H1 (cell line): ENCODE measurements at regions of chr2 and their contacts with region 1.

Region 1: DNA sequence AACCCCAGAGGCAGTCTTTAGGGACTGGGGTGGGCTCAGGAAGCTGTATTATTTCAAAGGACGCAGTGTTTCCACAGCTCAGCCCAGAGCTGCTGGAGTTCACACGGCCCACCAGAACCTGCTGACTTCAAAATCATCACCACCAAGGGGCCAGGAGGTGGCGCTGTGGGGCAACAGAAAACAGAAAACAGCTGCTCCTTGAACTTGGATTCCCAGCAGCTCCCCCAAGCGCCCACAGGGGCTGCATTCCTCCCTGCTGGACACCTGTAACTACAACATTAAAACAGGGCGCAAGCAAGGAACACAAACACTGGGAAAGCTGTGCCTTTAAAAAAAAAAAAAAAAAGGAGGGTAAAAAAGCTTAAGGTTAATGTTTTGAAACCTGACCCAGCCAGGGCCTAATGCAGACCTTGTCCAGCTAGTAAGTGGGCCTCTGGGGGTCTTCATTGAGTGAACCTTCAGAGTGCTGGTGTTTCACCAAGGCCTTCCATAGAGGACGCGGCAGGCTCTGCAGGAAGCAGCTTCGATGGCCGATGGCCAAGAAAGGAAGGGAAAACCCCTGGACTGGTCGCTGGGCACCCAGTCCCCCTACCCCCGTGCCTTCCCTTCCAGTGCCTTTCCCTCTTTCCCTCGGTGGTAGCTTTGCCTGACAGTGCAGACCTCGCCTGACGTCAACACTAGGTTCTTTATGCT is 25.9 kb downstream of the MLPH start:
- DNase-seq: peak; percentile 82 to 89
- H3K4me3 ChIP-seq: no peak overlapping the region
- H3K27ac ChIP-seq: no peak overlapping the region
- H3K4me1 ChIP-seq: peaks cover 0 to 3% (median 1%) of the 10 kb centered on the region in 4 experiments; a peak in 3 of 7 replicates
- H3K27me3 ChIP-seq: no peaks in the 10 kb centered on the region
- CTCF ChIP-seq: peak; percentile 84 to 99 (median 90)
- EP300 ChIP-seq: peak in 1 of 2 experiments; percentile 19; a peak in 1 of 3 replicates
- POLR2A ChIP-seq: no peak
- RAD21 ChIP-seq: peak; percentile 94 to 97

Region 2: GRCh38 chr2:237304763-237305514 is 208.0 kb before region 1 on chr2:
- CTCF ChIA-PET with region 1: no interaction called
- POLR2A ChIA-PET with region 1: no interaction called
- DNase-seq: no peak
- H3K4me3 ChIP-seq: no peak overlapping the region
- H3K27ac ChIP-seq: no peak overlapping the region
- H3K4me1 ChIP-seq: no peaks in the 10 kb centered on the region
- H3K27me3 ChIP-seq: 0 out of 7 replicates have a peak, but pooled peaks cover 0 to 2% (median 0%) of the 10 kb centered on the region in 4 experiments
- CTCF ChIP-seq: no peak
- EP300 ChIP-seq: no peak
- POLR2A ChIP-seq: no peak
- RAD21 ChIP-seq: no peak

Region 3: GRCh38 chr2:237374284-237375060 is 138.4 kb before region 1 on chr2:
- CTCF ChIA-PET with region 1: no interaction called
- POLR2A ChIA-PET with region 1: no interaction called
- DNase-seq: no peak
- H3K4me3 ChIP-seq: no peak overlapping the region
- H3K27ac ChIP-seq: no peak overlapping the region
- H3K4me1 ChIP-seq: no peaks in the 10 kb centered on the region
- H3K27me3 ChIP-seq: no peaks in the 10 kb centered on the region
- CTCF ChIP-seq: no peak
- EP300 ChIP-seq: no peak
- POLR2A ChIP-seq: no peak
- RAD21 ChIP-seq: no peak

Region 4: DNA sequence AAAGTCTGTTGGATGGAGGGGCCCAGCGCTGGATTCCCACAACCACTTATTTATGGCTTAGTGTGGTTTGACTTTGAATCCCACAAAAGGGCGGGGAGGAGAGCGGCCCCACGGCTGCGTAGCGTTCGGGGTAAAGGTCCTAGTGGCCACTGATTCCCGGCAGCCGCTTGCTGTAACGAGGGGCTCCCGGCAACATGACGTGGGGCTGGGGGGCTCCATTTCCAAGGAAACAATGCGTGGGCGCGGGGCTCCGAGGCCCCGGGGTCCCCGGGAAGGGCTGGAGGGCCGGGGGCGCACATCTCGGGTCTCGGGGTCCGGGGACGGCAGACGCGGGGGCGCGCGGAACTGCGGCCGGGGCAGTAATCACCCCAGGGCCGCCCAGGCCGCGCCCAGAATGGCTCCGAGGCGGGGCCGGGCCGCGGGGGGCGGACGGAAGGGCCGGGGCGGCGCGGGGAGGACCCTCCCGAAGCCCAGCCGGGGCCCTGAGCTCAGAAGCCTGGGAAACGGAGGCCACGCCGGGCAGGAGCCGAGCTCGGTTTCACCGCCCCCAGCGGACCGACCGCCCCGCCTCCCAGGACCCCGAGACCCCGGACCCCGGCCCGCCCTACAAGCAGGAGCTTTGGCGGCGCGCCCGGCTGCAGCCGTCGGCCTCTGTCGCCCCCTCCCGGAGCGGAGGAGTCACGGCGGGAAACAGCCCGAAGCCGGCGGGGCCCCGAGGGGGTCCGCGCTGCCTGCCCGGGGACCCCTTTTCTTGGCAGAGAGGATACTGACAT is 37.8 kb before region 1 on chr2:
- CTCF ChIA-PET with region 1: interaction called, 55 read pairs
- POLR2A ChIA-PET with region 1: interaction called, 6 read pairs
- DNase-seq: peak in 1 of 2 experiments; percentile 97
- H3K4me3 ChIP-seq: peak overlapping the region; percentile 53 to 96 (median 64)
- H3K27ac ChIP-seq: peak overlapping the region; percentile 61; the same call in 1 of the 2 replicates
- H3K4me1 ChIP-seq: peaks cover 0 to 13% (median 7%) of the 10 kb centered on the region in 4 experiments; a peak in 4 of 7 replicates
- H3K27me3 ChIP-seq: peaks cover 0 to 7% (median 7%) of the 10 kb centered on the region in 4 experiments; a peak in 3 of 7 replicates
- CTCF ChIP-seq: peak; percentile 63 to 90 (median 77)
- EP300 ChIP-seq: no peak
- POLR2A ChIP-seq: peak in 1 of 2 experiments; percentile 59; a peak in 1 of 3 replicates
- RAD21 ChIP-seq: peak; percentile 46 to 70; a peak in 3 of 4 replicates

Region 5: DNA sequence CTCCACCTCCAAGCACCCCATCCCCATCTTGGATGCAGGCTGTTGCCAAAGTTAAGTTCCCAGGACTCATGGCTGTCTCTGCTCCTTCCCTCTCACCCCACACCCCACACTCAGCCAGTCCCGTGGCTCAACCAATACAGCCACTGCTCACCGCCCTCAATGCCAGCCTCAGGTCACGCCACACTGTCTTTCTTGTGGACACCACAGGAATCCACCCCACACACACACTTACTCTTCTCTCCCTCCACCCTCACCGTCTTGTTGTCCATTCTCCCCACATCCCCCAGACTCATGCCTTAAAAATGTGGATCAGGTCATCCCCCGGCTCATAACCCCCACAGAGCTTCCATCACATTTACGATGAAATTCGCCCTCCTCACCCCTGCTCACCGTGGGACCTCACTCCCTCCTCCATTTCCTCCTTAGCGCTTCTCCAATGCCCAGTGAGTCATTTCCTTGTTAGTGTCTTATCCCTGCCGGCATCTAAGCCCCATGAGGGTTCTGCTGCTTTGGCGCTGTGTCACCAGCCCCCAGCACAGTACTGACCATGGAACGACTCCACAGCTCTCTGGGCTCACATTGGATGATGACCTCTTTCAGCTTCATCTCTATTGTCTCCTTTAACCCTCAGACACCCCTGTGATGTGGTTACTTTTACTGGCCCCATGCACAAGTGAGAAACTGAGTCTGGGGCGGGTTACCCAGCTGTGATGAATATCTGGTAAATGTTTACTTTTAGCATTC is 12.1 kb before region 1 on chr2:
- CTCF ChIA-PET with region 1: interaction called, 78 read pairs
- POLR2A ChIA-PET with region 1: interaction called, 4 read pairs
- DNase-seq: peak in 1 of 2 experiments; percentile 53
- H3K4me3 ChIP-seq: no peak overlapping the region
- H3K27ac ChIP-seq: no peak overlapping the region
- H3K4me1 ChIP-seq: peaks cover 0 to 4% (median 0%) of the 10 kb centered on the region in 4 experiments; a peak in 5 of 7 replicates
- H3K27me3 ChIP-seq: no peaks in the 10 kb centered on the region
- CTCF ChIP-seq: no peak
- EP300 ChIP-seq: no peak
- POLR2A ChIP-seq: no peak
- RAD21 ChIP-seq: no peak

Region 6: DNA sequence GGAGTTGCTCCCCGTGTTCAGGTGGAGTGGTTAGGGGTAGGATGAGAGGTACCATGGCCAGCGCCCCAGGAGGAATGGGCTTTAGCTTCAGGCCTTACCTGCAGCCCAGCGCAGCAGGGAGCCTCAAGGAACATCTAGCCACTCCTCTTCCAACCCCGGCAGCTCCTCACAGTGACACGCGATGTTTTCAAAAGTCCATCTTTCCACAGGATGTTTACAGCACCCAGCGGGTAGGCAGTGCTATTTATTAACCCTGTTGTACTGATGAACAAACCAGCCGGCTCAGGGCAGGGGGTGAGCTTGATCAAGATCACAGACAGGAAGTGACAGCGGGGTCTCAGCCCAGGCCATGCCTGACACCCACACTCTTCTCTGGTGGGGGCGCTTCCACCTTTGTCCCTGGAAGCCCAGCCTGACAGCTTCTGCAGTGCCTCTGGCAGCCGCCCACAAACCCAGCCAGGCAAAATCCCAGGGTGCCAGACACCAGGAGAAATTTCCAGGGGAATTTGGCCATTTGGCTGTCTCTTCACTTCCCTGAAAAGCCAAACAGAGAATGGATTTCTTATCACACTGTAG is 35.0 kb after region 1 on chr2:
- CTCF ChIA-PET with region 1: interaction called, 23 read pairs
- POLR2A ChIA-PET with region 1: no interaction called
- DNase-seq: no peak
- H3K4me3 ChIP-seq: no peak overlapping the region
- H3K27ac ChIP-seq: no peak overlapping the region
- H3K4me1 ChIP-seq: no peaks in the 10 kb centered on the region
- H3K27me3 ChIP-seq: no peaks in the 10 kb centered on the region; a peak in 1 of 7 replicates
- CTCF ChIP-seq: no peak
- EP300 ChIP-seq: no peak
- POLR2A ChIP-seq: no peak
- RAD21 ChIP-seq: no peak

Region 7: GRCh38 chr2:237572021-237572741 is 59.3 kb after region 1 on chr2:
- CTCF ChIA-PET with region 1: interaction called, 107 read pairs
- POLR2A ChIA-PET with region 1: interaction called, 5 read pairs
- DNase-seq: peak; percentile 83 to 98
- H3K4me3 ChIP-seq: no peak overlapping the region
- H3K27ac ChIP-seq: no peak overlapping the region
- H3K4me1 ChIP-seq: peaks cover 0 to 8% (median 4%) of the 10 kb centered on the region in 4 experiments; a peak in 3 of 7 replicates
- H3K27me3 ChIP-seq: no peaks in the 10 kb centered on the region
- CTCF ChIP-seq: peak; percentile 98 to 99 (median 98)
- EP300 ChIP-seq: 0 out of 3 replicates have a peak, but pooled peaks of 1 of the 2 experiments have one; percentile 14
- POLR2A ChIP-seq: no peak
- RAD21 ChIP-seq: peak; percentile 99 to 100

Region 8: DNA sequence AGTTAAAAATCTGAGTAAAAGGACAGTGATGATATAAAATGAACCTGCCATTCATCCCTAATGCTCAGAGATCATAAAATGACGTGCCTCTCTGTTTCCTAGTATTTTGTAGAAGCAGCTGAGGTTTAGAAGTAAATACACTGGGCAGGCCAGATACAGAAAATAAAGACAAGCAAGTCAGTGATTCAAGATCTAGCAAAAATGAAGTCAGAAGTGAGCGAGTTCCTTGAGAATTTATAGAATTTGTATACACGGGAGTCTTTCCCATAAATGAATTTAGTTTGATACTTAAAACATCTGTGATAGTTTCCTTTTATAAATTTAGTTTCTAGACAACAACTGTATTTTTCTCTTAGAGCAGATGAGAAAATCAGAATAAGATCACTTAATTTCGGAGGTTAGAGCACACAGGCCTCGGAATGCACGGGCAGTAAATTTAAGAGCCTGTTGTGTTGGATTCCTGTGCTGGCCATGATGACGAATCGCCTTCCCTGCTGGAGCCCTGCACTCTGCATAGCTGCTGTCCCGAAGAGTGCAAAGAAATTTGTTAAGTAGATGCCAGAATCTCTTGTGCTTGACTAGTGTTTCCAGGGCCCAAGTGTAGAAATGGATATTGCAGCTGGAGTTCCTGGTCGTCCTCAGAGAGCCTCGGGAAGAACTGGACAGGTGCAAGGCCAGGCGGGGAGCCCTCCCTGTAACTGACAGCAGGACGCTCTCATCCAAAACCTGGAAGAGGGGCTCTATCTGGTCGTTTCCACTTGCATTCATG is 202.0 kb after region 1 on chr2:
- CTCF ChIA-PET with region 1: no interaction called
- POLR2A ChIA-PET with region 1: no interaction called
- DNase-seq: no peak
- H3K4me3 ChIP-seq: no peak overlapping the region
- H3K27ac ChIP-seq: no peak overlapping the region
- H3K4me1 ChIP-seq: peaks cover 0 to 25% (median 11%) of the 10 kb centered on the region in 4 experiments; a peak in 6 of 7 replicates
- H3K27me3 ChIP-seq: no peaks in the 10 kb centered on the region
- CTCF ChIP-seq: no peak
- EP300 ChIP-seq: no peak
- POLR2A ChIP-seq: no peak
- RAD21 ChIP-seq: no peak

Region 9: DNA sequence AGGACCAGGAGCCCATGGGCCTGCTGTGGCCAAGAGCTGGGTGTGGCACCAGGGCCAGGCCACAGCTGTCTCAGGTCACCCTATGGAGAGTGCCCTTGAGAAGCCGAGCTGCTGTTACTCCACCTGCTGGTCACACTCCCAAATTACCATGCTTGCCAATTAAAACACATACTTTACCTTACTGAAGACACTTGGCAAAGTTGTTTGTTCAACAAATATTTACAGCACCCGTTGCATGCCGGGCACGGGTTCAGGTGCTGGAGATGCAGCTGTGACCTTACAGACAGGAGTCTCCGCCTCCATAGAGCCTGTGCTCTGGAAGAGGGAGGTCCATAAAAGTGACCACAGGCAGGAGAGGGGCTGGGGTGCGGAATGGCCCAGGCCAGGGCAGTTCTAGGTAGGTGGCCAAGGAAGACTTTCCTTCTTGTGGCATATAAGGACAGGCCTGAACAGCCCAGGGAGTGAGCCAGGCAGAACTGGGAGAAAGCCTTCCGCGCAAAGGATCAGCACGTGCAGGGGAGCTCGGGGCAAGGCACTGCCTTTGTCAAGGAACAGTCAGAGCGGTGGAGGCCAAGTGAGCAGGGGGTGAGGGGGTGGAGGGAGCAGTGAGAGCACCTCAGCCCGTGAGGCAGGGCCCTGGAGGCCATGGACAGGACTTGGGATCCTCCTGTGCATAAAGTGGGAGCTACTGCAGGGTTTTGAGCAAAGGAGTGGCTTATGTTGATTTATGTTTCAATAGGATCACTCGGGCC is 262.1 kb after region 1 on chr2:
- CTCF ChIA-PET with region 1: interaction called, 11 read pairs
- POLR2A ChIA-PET with region 1: no interaction called
- DNase-seq: peak; percentile 7 to 80
- H3K4me3 ChIP-seq: no peak overlapping the region
- H3K27ac ChIP-seq: no peak overlapping the region
- H3K4me1 ChIP-seq: no peaks in the 10 kb centered on the region; a peak in 2 of 7 replicates
- H3K27me3 ChIP-seq: no peaks in the 10 kb centered on the region
- CTCF ChIP-seq: peak; percentile 65 to 84 (median 78)
- EP300 ChIP-seq: no peak
- POLR2A ChIP-seq: no peak
- RAD21 ChIP-seq: peak; percentile 62 to 69